Activated B cell treated with CpG ODN at 0.5 μM for 24 hours (primary cell): ENCODE measurements at regions of chr5 and their contacts with region 1.

Region 1: DNA sequence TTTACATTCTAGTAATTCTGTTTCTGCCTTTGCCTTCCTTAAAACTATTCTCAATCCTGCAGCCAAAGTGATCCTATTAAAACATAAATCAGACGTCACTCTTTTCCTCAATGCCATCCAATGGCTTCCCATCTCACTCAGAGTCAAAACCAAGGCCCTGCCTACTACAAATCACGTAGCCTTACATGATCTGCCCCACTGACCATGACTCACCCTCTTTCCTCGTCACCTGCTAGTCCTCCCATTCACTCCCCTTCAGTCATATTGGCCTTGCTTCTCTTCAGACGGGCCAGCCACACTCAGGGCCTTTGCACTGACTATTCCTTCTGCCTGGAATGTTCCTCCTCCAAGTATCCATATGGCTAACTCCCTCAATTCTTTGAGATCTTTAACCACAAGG is 39.0 kb upstream of the DMXL1 start:
- DNase-seq: no peak
- ATAC-seq: peak; percentile 87
- H3K4me3 Mint-ChIP-seq: peak overlapping the region; percentile 60
- H3K27ac Mint-ChIP-seq: peak overlapping the region; percentile 95
- H3K4me1 Mint-ChIP-seq: peaks cover 63% of the 10 kb centered on the region
- H3K27me3 Mint-ChIP-seq: no peaks in the 10 kb centered on the region
- CTCF ChIP-seq: no peak

Region 2: DNA sequence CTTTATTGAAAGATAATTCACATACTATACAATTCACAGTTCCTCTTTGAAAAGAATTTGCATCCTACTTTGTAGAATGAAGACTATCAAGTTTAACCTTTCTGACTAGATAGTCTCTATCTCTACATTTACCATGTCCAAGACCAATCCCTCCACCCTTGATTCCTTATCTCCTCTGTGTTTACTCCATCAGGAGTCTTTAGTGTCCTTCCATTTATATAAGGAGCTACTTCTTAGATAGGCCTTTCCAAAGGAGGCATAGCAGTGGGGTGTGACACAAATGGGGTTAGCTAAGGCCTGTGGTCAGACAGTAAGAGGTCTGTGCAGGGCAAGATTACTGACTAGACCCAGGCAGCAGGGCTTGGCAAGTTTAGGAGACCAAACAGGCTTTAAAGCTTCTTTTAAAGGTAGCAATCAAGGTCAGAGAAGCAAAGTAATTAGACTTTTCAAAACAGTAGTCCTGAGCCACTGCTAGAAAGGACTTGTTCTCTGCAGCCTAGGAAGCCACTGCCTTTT is 27.9 kb after region 1 on chr5:
- CTCF ChIA-PET with region 1: no interaction called
- POLR2A ChIA-PET with region 1: interaction called, 10 read pairs
- intact Hi-C with region 1: no loop called
- DNase-seq: no peak
- ATAC-seq: no peak
- H3K4me3 Mint-ChIP-seq: no peak overlapping the region
- H3K27ac Mint-ChIP-seq: peak overlapping the region; percentile 56
- H3K4me1 Mint-ChIP-seq: peaks cover 24% of the 10 kb centered on the region
- H3K27me3 Mint-ChIP-seq: no peaks in the 10 kb centered on the region
- CTCF ChIP-seq: no peak

Region 3: GRCh38 chr5:119395080-119395836 is 363.4 kb after region 1 on chr5:
- CTCF ChIA-PET with region 1: no interaction called
- POLR2A ChIA-PET with region 1: no interaction called
- intact Hi-C with region 1: no loop called
- DNase-seq: no peak
- ATAC-seq: peak; percentile 38
- H3K4me3 Mint-ChIP-seq: peak overlapping the region; percentile 25
- H3K27ac Mint-ChIP-seq: peak overlapping the region; percentile 80
- H3K4me1 Mint-ChIP-seq: peaks cover 98% of the 10 kb centered on the region
- H3K27me3 Mint-ChIP-seq: no peaks in the 10 kb centered on the region
- CTCF ChIP-seq: no peak

Region 4: GRCh38 chr5:119524485-119524884 is 492.6 kb after region 1 on chr5:
- CTCF ChIA-PET with region 1: no interaction called
- POLR2A ChIA-PET with region 1: no interaction called
- intact Hi-C with region 1: no loop called
- DNase-seq: no peak
- ATAC-seq: no peak
- H3K4me3 Mint-ChIP-seq: no peak overlapping the region
- H3K27ac Mint-ChIP-seq: no peak overlapping the region
- H3K4me1 Mint-ChIP-seq: peaks cover 7% of the 10 kb centered on the region
- H3K27me3 Mint-ChIP-seq: no peaks in the 10 kb centered on the region
- CTCF ChIP-seq: no peak